WTC11 (cell line): ENCODE measurements at regions of chr6 and their contacts with region 1.

Region 1: DNA sequence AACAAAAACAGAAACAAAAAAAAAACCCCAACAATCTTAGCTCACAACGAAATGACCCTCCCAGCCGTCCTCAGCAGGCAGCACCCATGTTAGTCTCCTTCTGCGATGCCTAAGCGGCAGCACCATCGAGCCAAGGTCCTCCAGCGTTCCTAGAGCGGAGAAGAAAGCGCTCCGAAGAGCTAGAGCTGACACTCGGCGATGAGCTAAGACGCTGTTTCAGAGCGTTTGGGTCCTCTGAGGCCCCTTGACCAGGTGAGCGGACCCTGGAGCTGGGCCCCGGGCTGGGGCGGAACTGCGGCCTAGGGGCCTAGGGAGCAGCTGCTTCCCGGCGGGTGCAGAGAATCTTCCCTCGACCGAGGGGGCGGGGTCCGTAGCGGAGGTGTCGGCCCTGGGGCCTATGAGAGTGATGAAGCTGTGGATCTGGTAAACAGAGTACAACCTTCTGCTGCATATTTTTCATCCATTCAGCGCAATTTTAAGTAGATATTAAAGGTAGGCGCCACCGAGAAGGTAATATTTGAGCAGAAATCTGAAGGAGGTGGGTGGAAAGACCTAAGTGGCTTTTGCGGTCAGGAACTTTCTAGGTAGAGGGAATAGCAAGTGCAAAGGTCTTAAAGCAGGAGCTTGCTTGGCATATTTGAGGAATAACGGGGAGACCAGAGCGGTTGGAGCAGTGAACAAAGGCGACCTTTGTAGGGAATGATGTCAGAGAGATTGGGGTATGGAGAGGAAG is at the start of gene ZSCAN26:
- DNase-seq: peak; percentile 91
- ATAC-seq: peak; percentile 96
- H3K4me3 Mint-ChIP-seq: no peak within 1 kb of the TSS
- H3K27ac Mint-ChIP-seq: no peak within 1 kb of the TSS; the same call in 1 of the 2 replicates
- H3K4me1 Mint-ChIP-seq: no peaks in the 10 kb centered on the region
- H3K27me3 Mint-ChIP-seq: peaks cover 32% of the 10 kb centered on the region
- CTCF ChIP-seq: no peak
- total RNA-seq, gene ZSCAN26: 5.2 to 7.5 TPM (median 6.6 TPM) in 3 replicates

Region 2: DNA sequence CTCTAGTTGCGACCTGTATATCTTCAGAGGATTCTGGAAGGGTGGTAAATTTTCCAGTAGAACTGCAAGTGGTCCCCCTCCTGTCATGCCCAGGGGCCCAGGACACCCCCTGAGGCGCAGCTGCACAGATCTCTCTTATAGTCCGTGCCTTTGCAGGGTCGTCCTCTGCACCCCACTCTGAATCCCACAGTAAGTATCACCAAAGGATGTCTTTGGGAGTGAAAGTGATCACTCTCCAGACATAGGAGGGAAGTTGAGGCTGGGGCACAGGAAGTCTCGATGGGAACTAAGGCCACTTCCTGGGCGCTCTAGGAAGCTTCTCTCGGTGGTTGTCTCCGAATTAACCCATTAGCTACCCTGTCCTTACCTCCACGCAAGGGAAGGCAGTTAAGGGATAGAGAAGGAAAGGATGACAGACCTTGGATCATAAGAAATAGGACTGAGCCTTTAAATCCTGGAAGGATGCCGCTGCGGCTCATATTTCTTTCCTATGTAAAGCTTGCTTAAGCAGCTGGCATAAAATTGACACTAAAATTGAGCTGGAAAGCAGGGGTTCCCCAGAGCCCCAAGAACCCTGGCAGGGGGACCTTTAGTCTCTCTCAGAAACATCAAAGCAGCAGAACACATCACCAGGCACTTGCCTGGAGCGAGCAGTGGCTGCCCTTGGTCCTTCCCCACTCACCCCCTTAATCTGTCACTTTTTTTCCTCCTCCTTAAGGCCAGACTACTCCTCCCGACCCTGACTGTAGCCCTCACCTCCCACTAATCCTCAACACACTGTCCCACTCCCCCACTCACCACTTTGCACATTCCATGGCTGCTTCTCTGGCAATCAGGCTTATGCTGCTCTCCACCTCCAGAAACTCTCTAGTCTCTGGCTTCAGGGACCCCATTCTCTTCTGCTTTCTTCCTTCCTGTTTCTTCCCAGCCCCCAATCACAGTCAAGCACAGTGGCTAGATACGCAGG is 14.8 kb before region 1 on chr6 and contains the start of gene ZKSCAN4:
- CTCF ChIA-PET with region 1: interaction called, 12 read pairs
- POLR2A ChIA-PET with region 1: interaction called, 13 read pairs
- DNase-seq: peak; percentile 79
- ATAC-seq: peak; percentile 92
- H3K4me3 Mint-ChIP-seq: peak within 1 kb of the TSS; percentile 99
- H3K27ac Mint-ChIP-seq: peak within 1 kb of the TSS; percentile 80
- H3K4me1 Mint-ChIP-seq: peaks cover 12% of the 10 kb centered on the region
- H3K27me3 Mint-ChIP-seq: peaks cover 18% of the 10 kb centered on the region
- CTCF ChIP-seq: no peak
- total RNA-seq, gene ZKSCAN4: 6.4 to 7.3 TPM (median 7.0 TPM) in 3 replicates

Region 3: DNA sequence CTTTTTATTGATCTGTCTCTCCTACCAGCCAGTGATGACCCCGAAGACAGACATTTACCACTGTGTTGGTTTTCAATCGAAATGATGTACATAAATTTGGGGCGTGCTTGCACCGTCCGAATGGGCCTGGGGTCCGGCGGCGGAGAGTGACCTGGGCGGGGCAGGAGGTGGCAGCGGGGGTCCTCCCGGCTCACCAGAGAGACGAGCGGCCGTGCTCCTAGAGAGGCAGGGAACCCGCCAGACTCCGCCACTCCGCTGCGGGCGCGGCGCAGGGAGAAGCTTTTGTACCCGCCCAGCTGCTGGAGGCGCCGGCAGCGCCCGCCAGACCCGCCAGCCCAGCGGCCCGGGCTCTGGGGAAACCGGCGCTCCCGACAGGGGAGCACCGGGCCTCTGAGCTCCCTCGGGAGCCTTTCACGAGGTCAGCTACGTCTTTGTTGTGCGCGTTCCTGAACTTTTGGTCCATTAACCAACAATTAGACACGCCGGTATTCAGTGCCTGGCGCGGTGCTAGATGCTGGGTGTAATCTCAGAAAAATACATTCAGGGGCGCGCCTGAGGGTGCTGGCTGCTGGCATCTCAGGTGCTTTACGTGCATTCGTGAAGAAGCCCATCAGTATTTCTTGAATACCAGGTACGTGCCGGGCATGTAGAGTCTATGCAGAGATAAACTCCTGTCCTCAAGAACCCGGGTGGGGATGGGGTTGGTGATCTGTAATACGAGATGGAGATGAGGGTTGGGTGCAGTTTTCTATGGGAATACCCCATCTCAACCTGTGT is 14.3 kb after region 1 on chr6 and contains the start of gene PGBD1:
- CTCF ChIA-PET with region 1: interaction called, 4 read pairs
- POLR2A ChIA-PET with region 1: interaction called, 10 read pairs
- DNase-seq: peak; percentile 92
- ATAC-seq: peak; percentile 97
- H3K4me3 Mint-ChIP-seq: peak within 1 kb of the TSS; percentile 97
- H3K27ac Mint-ChIP-seq: no peak within 1 kb of the TSS
- H3K4me1 Mint-ChIP-seq: peaks cover 14% of the 10 kb centered on the region
- H3K27me3 Mint-ChIP-seq: peaks cover 4% of the 10 kb centered on the region; the same call in 1 of the 2 replicates
- CTCF ChIP-seq: no peak
- total RNA-seq, gene PGBD1: 6.8 to 7.5 TPM (median 6.9 TPM) in 3 replicates

Region 4: DNA sequence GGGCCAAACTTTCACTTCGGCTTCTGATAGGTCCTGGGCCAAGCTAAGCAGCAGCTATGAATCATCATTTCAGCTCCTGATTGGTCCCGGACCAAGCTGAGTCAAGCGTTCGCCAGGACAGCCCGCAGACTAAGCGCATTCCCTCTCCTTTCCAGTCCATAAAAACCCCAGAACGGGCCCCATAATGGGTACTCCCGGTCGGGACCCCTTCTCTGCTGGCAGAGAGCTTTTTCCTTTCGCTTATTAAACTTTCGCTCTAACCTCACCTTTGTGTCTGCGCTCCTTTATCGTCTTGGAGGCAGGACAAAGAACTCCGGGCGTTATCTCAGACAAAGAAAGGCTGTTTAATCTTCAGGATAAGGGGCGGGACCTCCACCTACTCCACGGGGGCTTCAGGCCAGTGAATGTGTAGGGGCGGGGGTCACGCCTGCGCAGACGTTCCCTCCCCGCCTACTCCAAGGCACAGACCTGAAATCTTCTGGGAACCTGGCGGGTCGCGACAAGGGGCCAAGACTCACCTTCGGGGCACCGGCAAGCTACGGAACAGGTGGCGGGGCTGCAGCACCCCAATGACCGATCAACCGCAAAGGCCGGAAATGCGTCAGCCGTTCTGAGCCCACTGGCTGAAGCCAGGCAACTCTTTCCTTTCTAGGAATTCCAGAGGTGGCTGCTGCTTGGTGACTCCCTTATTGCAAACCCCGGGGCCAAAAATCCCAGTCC is 68.6 kb after region 1 on chr6 and contains the start of gene ZSCAN31:
- CTCF ChIA-PET with region 1: no interaction called
- POLR2A ChIA-PET with region 1: interaction called, 14 read pairs
- DNase-seq: peak; percentile 87
- ATAC-seq: peak; percentile 96
- H3K4me3 Mint-ChIP-seq: no peak within 1 kb of the TSS
- H3K27ac Mint-ChIP-seq: no peak within 1 kb of the TSS
- H3K4me1 Mint-ChIP-seq: peaks cover 9% of the 10 kb centered on the region
- H3K27me3 Mint-ChIP-seq: peaks cover 11% of the 10 kb centered on the region
- CTCF ChIP-seq: no peak
- total RNA-seq, gene ZSCAN31: 6.6 to 9.1 TPM (median 7.4 TPM) in 3 replicates

Region 5: GRCh38 chr6:28383235-28384142 is 116.4 kb after region 1 on chr6:
- CTCF ChIA-PET with region 1: interaction called, 11 read pairs
- POLR2A ChIA-PET with region 1: interaction called, 8 read pairs
- DNase-seq: peak; percentile 94
- ATAC-seq: peak; percentile 93
- H3K4me3 Mint-ChIP-seq: peak overlapping the region; percentile 76
- H3K27ac Mint-ChIP-seq: peak overlapping the region; percentile 98
- H3K4me1 Mint-ChIP-seq: peaks cover 26% of the 10 kb centered on the region
- H3K27me3 Mint-ChIP-seq: no peaks in the 10 kb centered on the region
- CTCF ChIP-seq: peak; percentile 12; the same call in 1 of the 2 replicates